ENCODE measurements at regions of chr17 and their contacts with region 1.

Region 1: DNA sequence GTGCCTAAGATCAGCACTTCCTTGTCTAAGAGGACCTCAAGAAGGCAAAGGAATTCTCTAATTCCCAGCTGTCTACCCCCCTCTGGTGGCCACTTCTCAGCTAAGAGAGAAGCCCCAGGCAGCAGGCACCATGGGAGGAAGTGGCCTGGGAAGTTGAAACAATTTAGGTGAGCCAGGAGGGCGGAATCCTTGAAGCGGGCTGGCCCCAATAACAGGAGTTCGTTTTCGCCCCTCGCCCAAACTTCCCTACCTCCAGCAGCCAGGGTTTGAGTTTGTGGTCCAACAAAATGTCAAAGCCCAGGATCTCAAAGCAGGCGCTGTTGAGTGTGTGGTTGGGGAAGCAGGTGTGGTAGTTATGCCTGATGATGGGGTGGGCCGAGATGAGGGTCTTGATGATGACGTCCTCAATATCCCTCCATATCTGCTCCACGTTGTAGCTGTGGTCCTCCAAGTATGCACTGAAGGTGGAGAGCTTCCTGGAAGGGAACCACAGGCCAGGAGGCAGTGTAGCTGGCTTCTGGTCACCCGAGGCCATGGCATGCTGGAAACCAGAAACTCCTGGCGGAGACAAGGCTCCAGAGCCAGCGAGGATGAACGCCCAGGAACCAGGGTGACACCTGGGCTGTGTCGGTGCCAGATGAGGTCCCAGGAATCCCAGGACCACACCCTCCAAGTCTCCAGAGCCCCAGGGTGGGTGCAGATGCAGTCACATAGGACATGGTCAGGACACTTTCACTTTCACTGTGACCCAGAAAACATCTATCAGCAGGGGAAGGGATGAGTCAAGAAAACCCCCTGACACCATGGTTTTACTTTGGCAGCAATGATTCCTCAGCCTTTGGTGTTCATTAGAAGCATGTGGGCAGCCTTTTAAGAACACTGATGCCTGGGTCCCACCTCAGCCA is 25.6 kb downstream of the TTLL6 start:
- DNase-seq: peak; percentile 59
- H3K4me3 Mint-ChIP-seq: no peak overlapping the region
- H3K27ac Mint-ChIP-seq: no peak overlapping the region
- H3K4me1 Mint-ChIP-seq: no peaks in the 10 kb centered on the region
- H3K27me3 Mint-ChIP-seq: peaks cover 20% of the 10 kb centered on the region

Region 2: GRCh38 chr17:47423406-47424295 is 1367.7 kb before region 1 on chr17:
- CTCF ChIA-PET with region 1: no interaction called
- intact Hi-C with region 1: no loop called
- DNase-seq: peak; percentile 4
- H3K4me3 Mint-ChIP-seq: no peak overlapping the region
- H3K27ac Mint-ChIP-seq: no peak overlapping the region
- H3K4me1 Mint-ChIP-seq: peaks cover 4% of the 10 kb centered on the region
- H3K27me3 Mint-ChIP-seq: peaks cover 8% of the 10 kb centered on the region

Region 3: GRCh38 chr17:48244121-48244711 is 547.2 kb before region 1 on chr17:
- CTCF ChIA-PET with region 1: no interaction called
- intact Hi-C with region 1: no loop called
- DNase-seq: no peak
- H3K4me3 Mint-ChIP-seq: no peak overlapping the region
- H3K27ac Mint-ChIP-seq: no peak overlapping the region
- H3K4me1 Mint-ChIP-seq: peaks cover 58% of the 10 kb centered on the region
- H3K27me3 Mint-ChIP-seq: no peaks in the 10 kb centered on the region

Region 4: GRCh38 chr17:48671697-48672171 is 119.6 kb before region 1 on chr17:
- CTCF ChIA-PET with region 1: interaction called, 4 read pairs
- intact Hi-C with region 1: loop called (anchors 2 kb)
- DNase-seq: peak; percentile 79
- H3K4me3 Mint-ChIP-seq: no peak overlapping the region
- H3K27ac Mint-ChIP-seq: no peak overlapping the region
- H3K4me1 Mint-ChIP-seq: no peaks in the 10 kb centered on the region
- H3K27me3 Mint-ChIP-seq: peaks cover 14% of the 10 kb centered on the region

Region 5: GRCh38 chr17:49101054-49101947 is 309.9 kb after region 1 on chr17:
- CTCF ChIA-PET with region 1: no interaction called
- intact Hi-C with region 1: no loop called
- DNase-seq: no peak
- H3K4me3 Mint-ChIP-seq: no peak overlapping the region
- H3K27ac Mint-ChIP-seq: no peak overlapping the region
- H3K4me1 Mint-ChIP-seq: no peaks in the 10 kb centered on the region
- H3K27me3 Mint-ChIP-seq: peaks cover 4% of the 10 kb centered on the region

Measured in activated naive CD4-positive, alpha-beta T cell treated with anti-CD3 and anti-CD28 coated beads for 36 hours (primary cell).